ENCODE measurements at regions of chr6 and their contacts with region 1.

Region 1: GRCh38 chr6:86856937-86857563 is 80.3 kb upstream of the HTR1E start:
- DNase-seq: peak; percentile 68
- H3K4me3 Mint-ChIP-seq: no peak overlapping the region
- H3K27ac Mint-ChIP-seq: no peak overlapping the region
- H3K4me1 Mint-ChIP-seq: no peaks in the 10 kb centered on the region
- H3K27me3 Mint-ChIP-seq: no peaks in the 10 kb centered on the region
- CTCF ChIP-seq: peak; percentile 70

Region 2: DNA sequence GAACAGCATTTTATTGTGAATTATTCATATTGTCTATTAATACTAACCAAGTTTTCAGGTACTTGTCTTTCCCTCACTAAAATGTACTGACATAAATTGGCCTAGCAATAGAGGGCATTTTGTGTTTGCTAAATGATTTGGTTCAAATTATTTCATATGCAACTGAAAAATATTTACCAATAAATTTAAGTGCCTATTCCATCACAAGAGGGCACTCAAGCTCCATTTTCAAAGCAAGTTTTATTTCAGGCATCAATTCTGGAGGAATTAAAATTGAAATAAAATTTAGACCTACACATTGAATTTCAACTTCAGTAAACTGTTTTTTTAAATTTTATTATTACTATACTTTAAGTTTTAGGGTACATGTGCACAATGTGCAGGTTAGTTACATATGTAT is 1100.1 kb before region 1 on chr6:
- CTCF ChIA-PET with region 1: interaction called, 3 read pairs
- POLR2A ChIA-PET with region 1: no interaction called
- intact Hi-C with region 1: loop called (anchors 5 kb)
- DNase-seq: peak; percentile 45
- H3K4me3 Mint-ChIP-seq: no peak overlapping the region
- H3K27ac Mint-ChIP-seq: no peak overlapping the region
- H3K4me1 Mint-ChIP-seq: no peaks in the 10 kb centered on the region
- H3K27me3 Mint-ChIP-seq: peaks cover 38% of the 10 kb centered on the region
- CTCF ChIP-seq: peak; percentile 48

Region 3: GRCh38 chr6:86357877-86358276 is 499.2 kb before region 1 on chr6:
- CTCF ChIA-PET with region 1: no interaction called
- POLR2A ChIA-PET with region 1: no interaction called
- intact Hi-C with region 1: loop called (anchors 5 kb)
- DNase-seq: no peak
- H3K4me3 Mint-ChIP-seq: no peak overlapping the region
- H3K27ac Mint-ChIP-seq: no peak overlapping the region
- H3K4me1 Mint-ChIP-seq: no peaks in the 10 kb centered on the region
- H3K27me3 Mint-ChIP-seq: no peaks in the 10 kb centered on the region
- CTCF ChIP-seq: no peak

Region 4: DNA sequence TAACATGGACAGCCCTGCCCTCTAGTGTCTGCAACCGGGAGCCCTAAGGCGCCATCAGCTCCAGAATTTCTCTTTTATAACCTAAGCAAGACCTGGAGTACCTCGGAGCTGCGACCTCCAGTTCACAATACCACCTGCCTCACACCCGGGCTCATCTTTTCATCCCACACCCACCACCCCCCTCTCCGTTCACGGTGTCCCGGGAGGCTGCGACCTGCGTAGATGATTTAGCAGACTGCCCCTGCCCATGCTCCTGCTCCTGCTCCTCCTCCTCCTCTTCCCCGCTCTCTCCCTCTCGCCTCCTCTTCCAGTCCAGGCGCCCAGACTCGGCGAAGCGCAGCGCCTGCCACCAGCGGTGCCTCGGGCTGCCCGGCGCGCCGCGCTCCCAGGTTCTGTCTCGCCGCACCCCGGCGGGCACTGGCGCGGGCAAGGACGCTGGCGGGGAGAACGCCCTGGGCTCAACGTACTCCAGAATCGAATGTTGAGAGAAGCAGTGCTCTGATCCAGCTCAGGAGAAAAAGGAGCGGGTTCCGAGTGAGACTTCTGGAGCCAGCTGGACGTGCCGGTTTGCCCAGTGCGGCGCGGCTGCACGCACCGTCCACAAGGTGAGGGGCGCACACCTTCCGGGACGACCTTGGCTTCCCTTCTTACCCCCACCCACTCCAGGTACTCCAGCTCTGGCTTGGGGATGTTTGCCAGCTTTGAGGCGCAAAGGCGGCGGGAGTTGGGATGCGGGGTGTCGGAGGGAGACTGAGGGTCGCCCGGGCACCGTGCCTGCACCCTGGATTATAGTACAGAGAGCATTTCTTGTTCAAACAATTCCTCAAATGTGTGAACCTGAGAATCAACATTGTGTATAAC is 80.4 kb after region 1 on chr6 and contains the start of gene HTR1E:
- CTCF ChIA-PET with region 1: interaction called, 6 read pairs
- POLR2A ChIA-PET with region 1: no interaction called
- intact Hi-C with region 1: loop called (anchors 2 kb)
- DNase-seq: peak; percentile 48
- H3K4me3 Mint-ChIP-seq: peak within 1 kb of the TSS; percentile 56
- H3K27ac Mint-ChIP-seq: no peak within 1 kb of the TSS
- H3K4me1 Mint-ChIP-seq: peaks cover 7% of the 10 kb centered on the region
- H3K27me3 Mint-ChIP-seq: peaks cover 67% of the 10 kb centered on the region
- CTCF ChIP-seq: peak; percentile 68
- total RNA-seq, gene HTR1E: not detected in 2 replicates

Region 5: GRCh38 chr6:87029711-87030314 is 172.8 kb after region 1 on chr6:
- CTCF ChIA-PET with region 1: interaction called, 4 read pairs
- POLR2A ChIA-PET with region 1: no interaction called
- intact Hi-C with region 1: loop called (anchors 1 kb)
- DNase-seq: peak; percentile 67
- H3K4me3 Mint-ChIP-seq: no peak overlapping the region
- H3K27ac Mint-ChIP-seq: no peak overlapping the region
- H3K4me1 Mint-ChIP-seq: no peaks in the 10 kb centered on the region
- H3K27me3 Mint-ChIP-seq: peaks cover 34% of the 10 kb centered on the region
- CTCF ChIP-seq: peak; percentile 51